HCT116 (cell line): ENCODE measurements at regions of chr15 and their contacts with region 1.

Region 1: GRCh38 chr15:82197733-82198594 is 64.6 kb downstream of the EFL1 start:
- DNase-seq: peak; percentile 51
- ATAC-seq: peak; percentile 99
- H3K4me3 ChIP-seq: no peak overlapping the region
- H3K27ac ChIP-seq: no peak overlapping the region
- H3K4me1 ChIP-seq: no peaks in the 10 kb centered on the region
- H3K27me3 ChIP-seq: no peaks in the 10 kb centered on the region
- CTCF ChIP-seq: peak; percentile 59 to 76 (median 74); a peak in 5 of 6 replicates
- POLR2A ChIP-seq: no peak
- RAD21 ChIP-seq: peak; percentile 75

Region 2: GRCh38 chr15:81410318-81410753 is 787.6 kb before region 1 on chr15:
- CTCF ChIA-PET with region 1: interaction called, 4 read pairs
- POLR2A ChIA-PET with region 1: no interaction called
- RAD21 ChIA-PET with region 1: no interaction called
- intact Hi-C with region 1: loop called (anchors 5 kb)
- DNase-seq: peak; percentile 56
- ATAC-seq: peak; percentile 87
- H3K4me3 ChIP-seq: no peak overlapping the region
- H3K27ac ChIP-seq: no peak overlapping the region
- H3K4me1 ChIP-seq: no peaks in the 10 kb centered on the region
- H3K27me3 ChIP-seq: peaks cover 15% of the 10 kb centered on the region
- CTCF ChIP-seq: peak; percentile 36 to 59 (median 52); a peak in 4 of 6 replicates
- POLR2A ChIP-seq: no peak
- RAD21 ChIP-seq: peak; percentile 73

Region 3: GRCh38 chr15:81480645-81481053 is 717.3 kb before region 1 on chr15:
- CTCF ChIA-PET with region 1: no interaction called
- POLR2A ChIA-PET with region 1: no interaction called
- RAD21 ChIA-PET with region 1: no interaction called
- intact Hi-C with region 1: loop called (anchors 2 kb)
- DNase-seq: peak; percentile 24
- ATAC-seq: peak; percentile 78
- H3K4me3 ChIP-seq: no peak overlapping the region
- H3K27ac ChIP-seq: no peak overlapping the region
- H3K4me1 ChIP-seq: no peaks in the 10 kb centered on the region
- H3K27me3 ChIP-seq: peaks cover 27% of the 10 kb centered on the region; the same call in 1 of the 2 replicates
- CTCF ChIP-seq: peak; percentile 62 to 89 (median 72); a peak in 5 of 6 replicates
- POLR2A ChIP-seq: no peak
- RAD21 ChIP-seq: peak; percentile 80

Region 4: DNA sequence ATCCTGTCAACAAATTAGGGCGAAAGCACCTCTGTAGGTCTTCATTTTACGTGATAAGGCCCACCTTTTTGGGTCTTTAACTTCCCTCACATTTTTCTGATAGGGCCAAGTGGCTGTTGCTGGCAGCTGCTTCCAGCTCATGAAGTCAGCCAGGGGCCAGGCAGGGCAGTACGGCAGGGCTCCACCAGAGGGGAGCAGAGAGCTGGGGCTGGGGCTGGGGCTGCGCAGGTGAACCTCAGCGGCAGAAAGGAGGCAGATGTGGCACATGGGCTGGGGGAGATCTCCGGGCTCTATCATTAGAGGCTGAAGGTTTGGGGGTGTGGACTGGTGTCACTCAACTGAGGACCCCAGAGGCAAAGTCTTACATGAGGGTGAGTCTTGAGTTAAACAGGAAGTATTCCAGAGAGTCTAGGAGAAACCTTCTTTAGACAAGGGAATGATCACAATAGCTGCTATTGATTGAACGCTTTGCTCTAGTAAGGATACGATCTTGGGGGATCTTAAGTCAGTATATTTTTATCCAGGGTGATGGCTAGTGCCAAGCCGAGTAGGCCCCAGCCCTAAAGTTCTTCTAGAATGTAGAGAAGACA is 89.4 kb before region 1 on chr15:
- CTCF ChIA-PET with region 1: interaction called, 24 read pairs
- POLR2A ChIA-PET with region 1: no interaction called
- RAD21 ChIA-PET with region 1: interaction called, 6 to 7 read pairs
- intact Hi-C with region 1: loop called (anchors 1 kb)
- DNase-seq: peak; percentile 15
- ATAC-seq: peak; percentile 98
- H3K4me3 ChIP-seq: no peak overlapping the region
- H3K27ac ChIP-seq: no peak overlapping the region
- H3K4me1 ChIP-seq: no peaks in the 10 kb centered on the region
- H3K27me3 ChIP-seq: no peaks in the 10 kb centered on the region
- CTCF ChIP-seq: peak; percentile 95 to 97 (median 97)
- POLR2A ChIP-seq: no peak
- RAD21 ChIP-seq: peak; percentile 92